Gastrocnemius medialis (tissue), 4 donors: ENCODE measurements at regions of chr17 and their contacts with region 1.

Region 1: DNA sequence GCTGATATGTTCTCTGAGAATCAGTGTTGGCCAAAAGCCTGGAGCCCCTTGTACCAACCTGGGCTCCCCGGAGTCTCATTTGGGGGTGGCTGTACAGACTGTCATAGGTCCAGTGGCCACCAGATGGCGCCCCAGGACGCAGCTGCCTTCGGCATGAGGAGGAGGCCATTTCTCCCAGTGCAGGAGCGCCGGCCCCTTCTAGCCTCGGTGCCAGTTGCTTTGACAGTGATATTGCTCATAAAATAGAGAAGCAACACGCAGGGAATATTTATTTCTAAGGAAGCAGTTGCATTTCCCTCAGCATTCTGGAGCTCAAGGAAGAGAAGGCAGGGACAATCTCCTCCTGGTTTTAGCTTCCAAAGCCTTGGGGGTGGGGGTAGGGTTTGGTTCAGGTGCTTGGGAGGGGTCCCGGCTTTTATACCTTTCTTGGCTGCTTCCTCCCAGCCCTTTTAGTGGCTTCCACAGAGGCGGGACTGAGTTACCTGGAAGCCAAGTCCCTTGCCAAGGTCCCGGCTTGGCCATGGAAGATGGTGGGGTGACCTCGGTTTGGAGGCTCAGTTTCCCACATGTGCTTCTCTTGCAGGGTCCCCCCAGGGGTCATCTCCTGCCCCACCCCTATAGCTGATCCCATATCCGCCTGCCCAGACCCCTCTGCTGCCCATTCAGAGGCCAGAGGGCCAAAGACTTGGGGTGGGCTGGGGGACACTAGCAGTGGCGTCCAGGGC is 117.8 kb upstream of the CDC42EP4 start:
- DNase-seq: peak; percentile 48 to 59
- ATAC-seq: peak; percentile 82 to 85
- H3K4me3 ChIP-seq: no peak overlapping the region
- H3K27ac ChIP-seq: no peak overlapping the region
- H3K4me1 ChIP-seq: no peaks in the 10 kb centered on the region
- H3K27me3 ChIP-seq: no peaks in the 10 kb centered on the region
- CTCF ChIP-seq: peak; percentile 73 to 94 (median 86)
- POLR2A ChIP-seq: no peak

Region 2: DNA sequence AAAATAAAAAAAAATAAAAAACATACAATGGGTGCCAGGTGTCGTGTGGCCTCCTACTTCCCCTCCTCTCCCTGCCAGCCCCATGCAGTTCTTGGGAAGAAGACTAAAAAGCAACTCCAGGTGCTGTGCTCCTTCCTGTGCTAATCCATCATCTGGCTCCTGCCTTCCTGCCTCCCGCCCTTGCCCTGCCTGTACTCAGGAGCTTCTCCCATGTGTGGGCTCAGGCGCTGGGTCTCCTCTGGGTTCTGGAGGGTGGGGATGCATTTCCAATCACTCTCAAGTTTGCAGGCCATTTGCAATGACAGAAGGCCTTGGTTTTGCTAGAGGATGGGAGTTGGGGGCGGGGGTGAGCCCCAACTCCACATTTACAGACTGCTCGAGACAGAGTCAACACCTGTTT is 91.8 kb after region 1 on chr17:
- in situ Hi-C with region 1: no loop called
- intact Hi-C with region 1: no loop called
- DNase-seq: no peak
- ATAC-seq: no peak
- H3K4me3 ChIP-seq: no peak overlapping the region
- H3K27ac ChIP-seq: no peak overlapping the region
- H3K4me1 ChIP-seq: no peaks in the 10 kb centered on the region
- H3K27me3 ChIP-seq: no peaks in the 10 kb centered on the region
- CTCF ChIP-seq: no peak
- POLR2A ChIP-seq: no peak

Region 3: DNA sequence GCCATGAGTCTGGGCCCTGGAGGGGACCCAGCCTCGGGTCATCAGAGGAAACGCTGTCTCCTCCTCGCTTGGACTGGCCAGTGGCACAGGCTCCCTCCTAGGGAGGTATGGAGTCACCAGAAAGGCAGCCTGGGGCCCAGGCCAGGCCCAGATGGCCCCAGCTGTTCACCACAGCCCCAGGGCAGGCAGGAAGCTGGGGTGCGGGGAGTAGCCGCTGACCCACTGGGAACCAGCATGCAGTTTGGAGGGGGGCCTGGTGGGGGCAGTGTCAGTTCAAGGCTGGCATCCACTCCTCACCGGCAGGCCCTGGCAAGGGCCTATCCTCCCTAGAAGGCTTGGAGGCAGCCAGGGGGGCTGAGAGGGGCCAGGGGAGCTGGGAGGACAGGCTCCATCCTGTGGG is 165.9 kb after region 1 on chr17:
- in situ Hi-C with region 1: loop called in 1 of 4 experiments (anchors 25 kb)
- intact Hi-C with region 1: no loop called
- DNase-seq: no peak
- ATAC-seq: peak in 1 of 2 donors; percentile 47
- H3K4me3 ChIP-seq: no peak overlapping the region
- H3K27ac ChIP-seq: no peak overlapping the region
- H3K4me1 ChIP-seq: no peaks in the 10 kb centered on the region
- H3K27me3 ChIP-seq: no peaks in the 10 kb centered on the region
- CTCF ChIP-seq: peak; percentile 9 to 58 (median 43)
- POLR2A ChIP-seq: no peak

Region 4: DNA sequence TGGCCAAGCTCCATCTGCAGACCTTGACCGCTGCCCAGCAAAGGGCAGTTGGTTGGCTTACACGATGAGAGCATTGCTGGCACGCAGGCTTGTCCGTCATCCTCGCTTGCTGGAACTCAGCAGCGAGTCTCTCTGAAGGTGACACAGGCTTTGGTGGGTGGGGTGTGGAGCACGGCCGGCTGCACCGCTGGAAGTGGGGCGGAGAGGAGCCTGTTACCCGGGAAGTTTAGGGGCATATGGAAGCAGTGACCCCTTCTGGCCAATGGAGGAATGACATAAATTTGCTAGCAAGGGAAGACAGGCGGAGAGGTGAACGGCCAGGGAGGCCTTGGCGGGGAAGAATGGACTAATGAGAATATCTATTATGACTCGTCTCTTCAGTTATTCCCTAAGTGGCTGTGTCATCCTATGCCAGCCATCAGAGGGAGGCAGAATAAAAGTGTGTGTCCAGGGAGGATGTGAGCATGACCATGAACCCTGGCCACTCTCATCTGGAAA is 280.5 kb after region 1 on chr17:
- in situ Hi-C with region 1: loop called in 2 of 4 experiments (anchors 10 kb)
- intact Hi-C with region 1: loop called (anchors 1 kb)
- DNase-seq: peak in 1 of 2 donors; percentile 14
- ATAC-seq: no peak
- H3K4me3 ChIP-seq: no peak overlapping the region
- H3K27ac ChIP-seq: no peak overlapping the region
- H3K4me1 ChIP-seq: no peaks in the 10 kb centered on the region
- H3K27me3 ChIP-seq: peaks cover 0 to 21% (median 0%) of the 10 kb centered on the region in 3 donors
- CTCF ChIP-seq: peak; percentile 23 to 71 (median 59)
- POLR2A ChIP-seq: no peak

Region 5: GRCh38 chr17:74152591-74153455 is 723.2 kb after region 1 on chr17:
- in situ Hi-C with region 1: loop called in 1 of 4 experiments (anchors 25 kb)
- intact Hi-C with region 1: no loop called
- DNase-seq: no peak
- ATAC-seq: no peak
- H3K4me3 ChIP-seq: no peak overlapping the region
- H3K27ac ChIP-seq: no peak overlapping the region
- H3K4me1 ChIP-seq: no peaks in the 10 kb centered on the region
- H3K27me3 ChIP-seq: no peaks in the 10 kb centered on the region
- CTCF ChIP-seq: no peak
- POLR2A ChIP-seq: no peak

Region 6: GRCh38 chr17:74176546-74177001 is 747.0 kb after region 1 on chr17:
- in situ Hi-C with region 1: loop called (anchors 10 to 25 kb)
- intact Hi-C with region 1: loop called (anchors 1 kb)
- DNase-seq: peak in 1 of 2 donors; percentile 14
- ATAC-seq: peak in 1 of 2 donors; percentile 66
- H3K4me3 ChIP-seq: no peak overlapping the region
- H3K27ac ChIP-seq: no peak overlapping the region
- H3K4me1 ChIP-seq: no peaks in the 10 kb centered on the region
- H3K27me3 ChIP-seq: peaks cover 0 to 8% (median 8%) of the 10 kb centered on the region in 3 donors
- CTCF ChIP-seq: peak; percentile 27 to 67 (median 59)
- POLR2A ChIP-seq: no peak